ENCODE measurements at regions of chr21 and their contacts with region 1.

Region 1: DNA sequence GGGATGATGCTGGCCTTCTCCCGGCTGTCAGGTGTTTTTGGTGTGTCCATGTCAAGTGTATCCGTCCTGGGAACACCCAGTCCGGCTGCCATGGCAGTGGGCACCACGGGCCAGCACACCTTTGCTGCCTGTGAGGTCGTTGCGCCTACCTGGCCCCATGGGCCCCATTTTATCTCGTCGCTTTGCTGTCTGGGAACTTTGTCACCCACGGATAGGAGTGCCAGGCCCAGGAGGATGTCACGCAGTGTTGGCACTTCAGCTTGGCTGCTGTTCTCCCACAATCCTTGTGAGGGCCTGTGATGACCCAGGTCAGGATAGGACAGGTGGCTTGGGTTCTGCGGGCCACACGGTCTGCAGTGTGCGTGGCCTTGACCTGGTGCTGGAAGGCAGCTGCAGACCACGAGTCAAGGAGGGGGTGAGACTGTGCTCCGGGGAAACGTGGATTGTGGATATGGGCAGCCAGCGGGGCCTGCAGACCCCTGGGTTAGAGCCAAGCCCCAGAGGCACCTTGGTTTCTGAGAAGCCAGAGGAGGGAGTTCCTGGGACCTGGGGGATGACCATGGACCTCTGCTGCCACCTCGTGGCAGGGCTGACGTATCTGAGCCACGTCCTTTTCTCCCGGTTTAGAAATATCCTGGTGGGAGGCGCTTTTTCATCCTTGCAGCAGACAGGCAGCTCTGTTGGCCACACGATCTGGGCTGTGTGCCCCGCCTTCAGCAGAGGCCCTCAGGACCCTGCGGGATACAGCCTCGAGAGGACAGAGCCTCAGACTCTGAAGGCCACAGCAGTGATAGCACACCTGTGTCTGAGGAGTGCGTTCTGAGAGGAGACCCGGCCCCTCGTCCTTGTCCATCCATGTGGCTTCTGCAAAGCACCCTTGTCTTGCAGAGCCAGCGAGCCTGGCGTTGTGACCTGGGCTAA is 161.1 kb upstream of the COL6A1 start:
- DNase-seq: peak; percentile 63
- H3K4me3 ChIP-seq: no peak overlapping the region
- H3K27ac ChIP-seq: no peak overlapping the region
- H3K4me1 ChIP-seq: peaks cover 19% of the 10 kb centered on the region
- H3K27me3 ChIP-seq: no peaks in the 10 kb centered on the region
- CTCF ChIP-seq: peak; percentile 77 to 90

Region 2: GRCh38 chr21:45439161-45439872 is 381.1 kb before region 1 on chr21:
- CTCF ChIA-PET with region 1: no interaction called
- dilution Hi-C with region 1: no loop called
- in situ Hi-C with region 1: no loop called
- intact Hi-C with region 1: loop called (anchors 2 kb)
- DNase-seq: peak; percentile 59
- H3K4me3 ChIP-seq: peak overlapping the region in 2 of 3 experiments; percentile 20 to 30
- H3K27ac ChIP-seq: no peak overlapping the region
- H3K4me1 ChIP-seq: peaks cover 7% of the 10 kb centered on the region
- H3K27me3 ChIP-seq: no peaks in the 10 kb centered on the region
- CTCF ChIP-seq: peak; percentile 79 to 96

Region 3: GRCh38 chr21:45596704-45597318 is 223.6 kb before region 1 on chr21:
- CTCF ChIA-PET with region 1: no interaction called
- dilution Hi-C with region 1: no loop called
- in situ Hi-C with region 1: no loop called
- intact Hi-C with region 1: loop called (anchors 1 kb)
- DNase-seq: peak; percentile 21
- H3K4me3 ChIP-seq: no peak overlapping the region
- H3K27ac ChIP-seq: no peak overlapping the region
- H3K4me1 ChIP-seq: no peaks in the 10 kb centered on the region
- H3K27me3 ChIP-seq: no peaks in the 10 kb centered on the region
- CTCF ChIP-seq: peak; percentile 82 to 93

Region 4: DNA sequence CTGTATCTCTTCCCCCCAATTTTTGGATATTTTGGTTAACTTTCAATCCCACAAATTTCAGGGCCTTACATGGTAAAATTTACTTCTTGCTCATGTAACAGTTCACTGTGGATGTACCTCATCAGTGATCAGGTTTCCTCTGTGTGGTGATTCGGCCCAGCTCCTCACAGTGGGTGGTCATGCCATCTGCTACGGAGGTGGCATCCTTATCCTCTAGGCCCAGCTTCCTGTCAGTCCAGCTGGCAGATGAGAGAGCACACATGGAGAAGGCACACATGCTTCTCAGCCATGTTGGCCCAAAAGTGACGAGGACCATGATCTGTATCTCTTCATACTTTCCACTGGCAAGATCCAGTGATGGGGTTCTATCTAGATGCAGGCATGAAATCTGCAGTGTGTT is 149.7 kb before region 1 on chr21:
- CTCF ChIA-PET with region 1: no interaction called
- dilution Hi-C with region 1: no loop called
- in situ Hi-C with region 1: no loop called
- intact Hi-C with region 1: no loop called
- DNase-seq: no peak
- H3K4me3 ChIP-seq: no peak overlapping the region
- H3K27ac ChIP-seq: no peak overlapping the region
- H3K4me1 ChIP-seq: no peaks in the 10 kb centered on the region
- H3K27me3 ChIP-seq: peaks cover 3% of the 10 kb centered on the region
- CTCF ChIP-seq: no peak

Region 5: DNA sequence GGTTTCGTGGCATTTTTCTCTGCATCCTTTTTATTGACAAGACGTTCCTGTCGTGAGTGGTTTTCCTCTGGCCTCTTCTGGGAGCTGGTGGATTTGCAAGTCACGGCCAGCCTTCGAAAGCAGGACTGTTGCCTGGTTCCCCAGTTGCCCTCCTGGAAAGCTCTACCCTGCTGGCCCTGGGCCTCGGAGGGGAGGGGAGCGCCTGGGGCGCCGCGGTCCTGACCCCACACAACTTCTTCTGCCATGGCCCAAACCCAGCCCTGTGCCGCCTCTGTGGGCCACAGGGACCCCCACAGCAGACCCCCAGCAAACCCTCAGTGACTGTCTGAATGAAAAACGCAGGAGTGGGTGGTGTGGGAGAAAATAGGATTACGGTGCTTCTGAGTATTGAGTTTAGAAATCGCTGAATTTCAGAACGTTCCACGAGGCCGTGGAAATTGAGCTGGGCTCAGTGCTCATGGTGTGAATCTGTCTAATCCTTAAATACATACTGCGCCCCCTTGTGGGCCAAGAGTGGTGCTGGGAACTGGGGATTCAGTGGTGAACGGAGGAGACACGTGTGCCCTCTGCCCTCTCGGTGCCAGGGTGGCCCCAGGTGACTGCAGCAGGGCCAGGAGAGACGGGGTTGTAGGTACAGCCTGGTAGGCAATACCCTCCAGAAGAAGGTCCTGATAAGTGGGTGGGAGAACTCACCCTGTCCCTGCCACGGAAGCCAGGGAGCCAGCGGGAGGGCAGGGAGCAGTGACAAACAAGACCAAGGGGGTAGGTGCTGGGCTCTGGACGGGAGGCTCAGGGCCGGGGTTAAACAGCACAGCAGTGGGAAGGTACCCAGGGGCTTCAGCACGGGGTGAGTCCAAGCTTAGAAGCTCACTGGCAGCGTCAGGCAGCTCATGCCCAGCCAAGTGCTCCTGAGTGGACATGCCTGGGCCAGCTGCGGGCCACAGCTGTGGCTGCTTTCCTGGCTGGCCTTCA is 60.0 kb after region 1 on chr21:
- CTCF ChIA-PET with region 1: interaction called, 4 read pairs
- dilution Hi-C with region 1: no loop called
- in situ Hi-C with region 1: no loop called
- intact Hi-C with region 1: loop called (anchors 1 kb)
- DNase-seq: peak; percentile 67
- H3K4me3 ChIP-seq: peak overlapping the region in 2 of 3 experiments; percentile 7 to 12
- H3K27ac ChIP-seq: peak overlapping the region; percentile 33
- H3K4me1 ChIP-seq: peaks cover 16% of the 10 kb centered on the region
- H3K27me3 ChIP-seq: no peaks in the 10 kb centered on the region
- CTCF ChIP-seq: peak; percentile 82 to 89